Activated CD4-positive, alpha-beta T cell treated with anti-CD3 and anti-CD28 coated beads, Interleukin-2, amount 10 ng/mL, durations not matched to agents 24 days and 14 days (primary cell): ENCODE measurements at regions of chr1 and their contacts with region 1.

Region 1: DNA sequence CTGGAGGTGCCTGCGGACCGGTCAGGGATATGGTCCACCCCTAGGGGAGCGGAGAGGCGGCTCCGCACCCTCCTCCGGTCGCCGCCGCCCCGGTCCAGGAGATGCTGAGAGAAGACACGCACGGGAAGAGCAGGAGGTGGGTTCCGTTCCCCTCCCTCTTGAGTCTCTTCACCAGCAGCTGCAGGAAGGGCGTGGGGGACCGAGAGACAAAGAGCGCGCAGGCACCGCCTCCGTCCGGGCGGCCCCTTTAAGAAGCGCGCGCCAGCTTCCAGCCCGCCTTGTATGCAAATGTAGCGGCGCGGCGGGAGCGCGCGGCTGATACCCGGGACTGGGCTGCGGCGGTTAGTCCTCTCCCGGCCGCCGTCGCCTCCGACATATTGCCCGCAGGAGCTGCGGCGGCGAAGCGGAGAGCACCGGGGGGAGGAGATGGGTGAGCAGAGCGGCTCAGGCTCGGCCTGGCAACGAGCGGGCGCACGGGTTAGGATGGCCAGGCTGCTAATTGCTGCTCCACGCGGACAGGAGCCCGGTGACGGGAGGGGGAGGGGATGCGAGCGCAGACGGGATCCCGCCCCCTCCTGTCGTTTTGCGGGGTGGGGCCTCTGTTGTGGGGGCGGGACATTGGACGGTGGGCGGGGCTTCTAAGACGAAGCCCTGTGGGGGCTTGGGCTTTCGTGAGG is at the start of gene TMEM39B:
- DNase-seq: peak; percentile 98
- H3K4me3 Mint-ChIP-seq: peak within 1 kb of the TSS; percentile 92
- H3K27ac Mint-ChIP-seq: peak within 1 kb of the TSS; percentile 96
- H3K4me1 Mint-ChIP-seq: peaks cover 43% of the 10 kb centered on the region
- H3K27me3 Mint-ChIP-seq: no peaks in the 10 kb centered on the region
- total RNA-seq, gene TMEM39B: 34.5 and 38.0 TPM in 2 replicates

Region 2: GRCh38 chr1:31938174-31938950 is 134.4 kb before region 1 on chr1 and contains the start of gene PTP4A2:
- intact Hi-C with region 1: loop called (anchors 5 kb)
- DNase-seq: peak; percentile 96
- H3K4me3 Mint-ChIP-seq: peak within 1 kb of the TSS; percentile 95
- H3K27ac Mint-ChIP-seq: peak within 1 kb of the TSS; percentile 96
- H3K4me1 Mint-ChIP-seq: peaks cover 66% of the 10 kb centered on the region
- H3K27me3 Mint-ChIP-seq: no peaks in the 10 kb centered on the region
- total RNA-seq, gene PTP4A2: 363 and 390 TPM in 2 replicates

Region 3: DNA sequence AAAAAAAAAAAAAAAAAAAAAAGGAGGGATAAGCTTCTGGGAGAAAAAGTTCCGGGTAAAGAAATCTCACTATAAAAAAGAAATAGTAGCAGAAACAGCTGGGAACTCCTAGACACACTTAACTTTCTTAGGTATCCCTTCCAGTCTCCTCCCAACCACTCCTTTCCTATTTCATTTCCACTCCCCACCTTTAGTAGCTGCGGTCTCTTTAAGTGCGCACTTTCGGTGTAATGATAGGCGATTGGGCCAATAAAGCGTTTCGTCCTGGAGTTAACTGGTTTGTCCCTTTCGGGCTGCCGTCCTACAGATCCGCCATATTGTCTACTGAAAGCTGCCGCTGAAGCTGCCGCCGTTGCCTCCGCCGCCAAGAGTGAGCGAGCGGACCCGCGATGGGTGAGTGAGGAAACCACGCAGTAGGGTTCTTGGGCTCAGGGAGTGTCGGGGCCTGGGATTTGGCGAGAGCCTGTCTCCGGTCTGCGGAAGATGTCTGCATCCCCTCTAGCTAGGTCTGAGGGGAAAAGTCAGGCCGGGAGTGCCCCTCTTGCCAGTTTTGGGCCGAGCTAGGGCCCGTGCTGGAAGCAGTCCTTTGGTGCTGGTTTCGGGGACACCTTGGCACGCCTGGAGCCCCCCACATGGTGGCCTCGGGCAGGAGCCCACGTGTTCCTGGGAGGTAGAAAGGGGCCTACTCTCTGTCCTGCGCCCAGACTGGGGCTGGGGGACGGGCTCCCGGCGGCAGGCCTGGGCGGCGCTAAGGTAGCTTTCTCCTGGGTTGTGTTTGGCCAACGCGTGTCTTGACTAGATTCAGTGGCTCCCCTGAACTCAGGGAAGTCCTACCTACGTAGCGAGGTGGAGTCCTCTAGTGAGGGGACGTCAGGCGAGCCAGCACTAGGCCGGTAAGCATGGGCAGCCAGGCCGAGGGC is 35.2 kb after region 1 on chr1 and contains the start of gene KPNA6:
- intact Hi-C with region 1: loop called (anchors 1 kb)
- DNase-seq: peak; percentile 97
- H3K4me3 Mint-ChIP-seq: peak within 1 kb of the TSS; percentile 99
- H3K27ac Mint-ChIP-seq: peak within 1 kb of the TSS; percentile 98
- H3K4me1 Mint-ChIP-seq: peaks cover 31% of the 10 kb centered on the region
- H3K27me3 Mint-ChIP-seq: no peaks in the 10 kb centered on the region
- total RNA-seq, gene KPNA6: 79.4 and 87.6 TPM in 2 replicates